GM10248 (cell line): ENCODE measurements at regions of chr6 and their contacts with region 1.

Region 1: DNA sequence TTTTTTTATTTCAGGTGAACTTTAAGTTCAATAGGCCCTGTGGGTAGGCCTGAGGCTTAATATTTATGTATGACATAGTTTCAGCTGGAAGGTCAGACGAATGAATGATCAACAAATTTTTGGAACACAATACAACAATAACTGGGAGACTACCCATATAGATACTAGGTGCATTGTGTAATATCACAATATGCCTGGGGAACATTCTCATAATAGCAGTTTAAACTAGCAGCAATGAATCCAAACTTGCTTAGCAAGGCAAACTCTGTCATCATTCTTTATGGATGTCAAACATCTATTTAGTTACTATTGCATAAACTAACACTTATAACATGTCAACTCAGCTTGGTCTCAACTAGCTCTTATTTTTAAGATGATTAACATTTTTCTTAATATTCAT is 49.3 kb downstream of the ELOVL4 start:
- DNase-seq: no peak
- CTCF ChIP-seq: no peak

Region 2: GRCh38 chr6:79421707-79422484 is 476.2 kb before region 1 on chr6:
- CTCF ChIA-PET with region 1: no interaction called
- POLR2A ChIA-PET with region 1: no interaction called
- DNase-seq: no peak
- CTCF ChIP-seq: no peak

Region 3: DNA sequence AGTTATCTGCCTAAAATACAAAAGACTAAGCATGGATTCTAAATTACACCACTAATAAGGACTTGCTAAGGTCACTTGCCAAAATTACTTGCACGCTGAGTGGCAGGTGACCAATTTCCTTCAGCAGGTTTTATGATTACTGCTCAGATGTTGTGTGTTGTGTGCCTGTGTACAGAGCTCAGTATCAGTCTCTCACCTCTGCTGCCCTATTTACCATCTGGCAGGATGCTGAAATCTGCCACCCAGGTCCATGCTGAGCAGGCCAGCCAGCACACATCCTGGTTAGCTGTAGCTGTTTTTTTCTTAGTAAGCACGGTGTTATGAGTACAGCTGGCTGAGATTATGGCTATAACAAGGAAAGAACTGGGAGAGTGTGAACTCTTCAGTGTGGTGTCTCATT is 15.3 kb after region 1 on chr6:
- CTCF ChIA-PET with region 1: interaction called, 13 read pairs
- POLR2A ChIA-PET with region 1: no interaction called
- DNase-seq: no peak
- CTCF ChIP-seq: no peak